HepG2 (cell line): ENCODE measurements at regions of chr7 and their contacts with region 1.

Region 1: DNA sequence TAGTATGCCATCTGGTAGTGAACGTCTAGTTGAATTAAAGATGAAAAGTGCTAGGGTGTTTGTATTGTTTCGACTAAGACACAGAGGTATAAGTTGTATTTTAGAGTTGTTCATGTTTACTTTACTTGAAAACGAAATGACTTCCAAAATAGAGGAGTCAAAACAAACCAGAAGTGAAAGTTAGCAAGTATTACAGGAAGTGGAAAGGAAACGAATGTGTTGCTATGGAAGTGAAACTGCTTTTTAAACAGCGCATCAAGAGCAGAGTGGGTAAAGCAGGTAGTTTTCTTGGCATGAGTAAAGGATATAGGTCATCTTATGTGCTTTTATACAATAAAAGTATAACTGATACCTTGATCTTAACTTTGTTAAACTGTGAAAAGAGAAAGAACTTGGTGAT is 20.0 kb upstream of the GALNTL5 start:
- DNase-seq: no peak
- ATAC-seq: no peak
- H3K4me3 ChIP-seq: no peak overlapping the region
- H3K27ac ChIP-seq: no peak overlapping the region
- H3K4me1 ChIP-seq: no peaks in the 10 kb centered on the region
- H3K27me3 ChIP-seq: peaks cover 0 to 5% of the 10 kb centered on the region in 2 experiments; a peak in 1 of 5 replicates
- CTCF ChIP-seq: no peak
- EP300 ChIP-seq: no peak
- POLR2A ChIP-seq: no peak
- RAD21 ChIP-seq: no peak

Region 2: DNA sequence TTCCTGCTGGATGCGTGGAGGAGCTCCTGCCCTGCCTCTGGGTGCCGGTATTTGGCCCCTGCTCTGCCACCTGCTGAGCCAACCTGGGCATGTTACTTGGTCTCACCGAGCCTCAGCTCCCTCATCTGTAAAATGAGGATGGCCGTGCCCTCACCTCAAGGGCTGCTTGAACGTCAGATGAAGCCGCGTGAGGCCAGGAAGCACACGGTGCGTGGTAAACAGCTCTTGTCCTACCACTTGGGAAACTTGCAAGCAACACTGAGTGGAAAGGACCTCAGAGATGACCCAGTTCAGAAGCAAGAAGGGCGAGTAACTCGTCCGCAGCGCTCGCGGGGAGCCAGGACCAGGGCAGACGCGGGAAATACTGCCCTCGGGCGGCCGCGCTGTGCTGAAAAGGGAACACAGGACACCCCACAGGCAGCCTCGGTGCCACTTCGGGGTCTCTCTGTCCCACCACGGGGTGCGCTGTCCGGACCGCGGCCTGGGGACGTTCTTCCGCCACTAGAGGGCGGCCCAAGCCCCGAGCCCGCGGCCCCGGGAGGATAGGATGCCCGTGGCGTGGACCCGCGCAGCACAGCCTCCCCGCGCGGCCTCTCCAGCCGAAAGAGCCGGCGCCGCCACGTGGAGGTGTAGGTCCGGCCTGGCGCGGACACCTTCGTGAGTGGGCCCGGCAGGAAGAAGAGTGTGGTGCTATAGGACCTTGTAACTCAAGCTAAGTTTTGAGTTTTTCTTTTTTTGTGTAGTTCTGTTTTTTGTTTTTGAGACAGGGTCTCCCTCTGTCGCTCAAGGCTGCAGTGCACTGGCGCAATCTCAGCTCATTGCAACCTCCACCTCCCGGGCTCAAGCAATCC is 153.4 kb before region 1 on chr7:
- CTCF ChIA-PET with region 1: interaction called, 8 read pairs
- POLR2A ChIA-PET with region 1: no interaction called
- in situ Hi-C with region 1: loop called (anchors 10 kb)
- intact Hi-C with region 1: loop called (anchors 1 kb)
- DNase-seq: peak; percentile 43
- ATAC-seq: peak; percentile 98
- H3K4me3 ChIP-seq: no peak overlapping the region
- H3K27ac ChIP-seq: no peak overlapping the region
- H3K4me1 ChIP-seq: no peaks in the 10 kb centered on the region
- H3K27me3 ChIP-seq: peaks cover 6 to 16% of the 10 kb centered on the region in 2 experiments; a peak in 3 of 5 replicates
- CTCF ChIP-seq: peak; percentile 88
- EP300 ChIP-seq: no peak
- POLR2A ChIP-seq: no peak
- RAD21 ChIP-seq: peak; percentile 83

Region 3: DNA sequence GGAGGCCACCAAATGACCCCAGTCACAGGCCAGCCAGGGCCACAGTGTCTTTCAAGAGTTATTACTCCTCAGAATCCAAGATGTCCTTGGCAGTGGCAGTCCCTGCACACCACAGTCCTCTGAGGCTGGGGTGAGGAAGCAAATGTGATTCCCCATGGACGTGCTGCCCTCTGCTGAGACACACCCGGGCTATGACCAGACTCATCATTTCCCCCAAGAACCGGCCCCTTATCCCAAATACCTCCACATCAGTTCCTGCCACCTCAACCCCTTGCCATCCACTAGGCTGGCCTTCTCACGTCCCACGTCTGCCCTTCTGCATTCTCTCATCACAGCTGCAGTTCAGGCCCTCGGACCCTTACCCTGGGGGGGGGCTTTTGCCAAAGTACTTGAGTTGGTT is 64.3 kb before region 1 on chr7:
- CTCF ChIA-PET with region 1: no interaction called
- POLR2A ChIA-PET with region 1: no interaction called
- in situ Hi-C with region 1: no loop called
- intact Hi-C with region 1: loop called (anchors 5 kb)
- DNase-seq: no peak
- ATAC-seq: no peak
- H3K4me3 ChIP-seq: no peak overlapping the region
- H3K27ac ChIP-seq: no peak overlapping the region
- H3K4me1 ChIP-seq: peaks cover 29% of the 10 kb centered on the region
- H3K27me3 ChIP-seq: peaks cover 0 to 22% of the 10 kb centered on the region in 2 experiments
- CTCF ChIP-seq: peak; percentile 25
- EP300 ChIP-seq: no peak
- POLR2A ChIP-seq: no peak
- RAD21 ChIP-seq: no peak